Mammary epithelial cell (primary cell): ENCODE measurements at regions of chr7 and their contacts with region 1.

Region 1: GRCh38 chr7:87345166-87345927 is at the start of gene CROT:
- DNase-seq: peak; percentile 92
- H3K4me3 ChIP-seq: peak within 1 kb of the TSS; percentile 76 to 96 (median 90)
- H3K27ac ChIP-seq: peak within 1 kb of the TSS; percentile 77
- H3K4me1 ChIP-seq: peaks cover 35% of the 10 kb centered on the region
- H3K27me3 ChIP-seq: no peaks in the 10 kb centered on the region
- CTCF ChIP-seq: peak in 1 of 2 donors; percentile 2
- total RNA-seq, gene CROT: 15.9 to 34.0 TPM

Region 2: GRCh38 chr7:87231256-87231655 is 114.1 kb before region 1 on chr7:
- CTCF ChIA-PET with region 1: no interaction called
- dilution Hi-C with region 1: no loop called
- in situ Hi-C with region 1: no loop called
- intact Hi-C with region 1: no loop called
- DNase-seq: no peak
- H3K4me3 ChIP-seq: no peak overlapping the region
- H3K27ac ChIP-seq: no peak overlapping the region
- H3K4me1 ChIP-seq: no peaks in the 10 kb centered on the region
- H3K27me3 ChIP-seq: peaks cover 3% of the 10 kb centered on the region
- CTCF ChIP-seq: no peak

Region 3: GRCh38 chr7:87359366-87359765 is 14.0 kb after region 1 on chr7:
- CTCF ChIA-PET with region 1: no interaction called
- dilution Hi-C with region 1: no loop called
- in situ Hi-C with region 1: no loop called
- intact Hi-C with region 1: loop called (anchors 2 kb)
- DNase-seq: peak; percentile 83
- H3K4me3 ChIP-seq: no peak overlapping the region
- H3K27ac ChIP-seq: peak overlapping the region; percentile 43
- H3K4me1 ChIP-seq: peaks cover 15% of the 10 kb centered on the region
- H3K27me3 ChIP-seq: no peaks in the 10 kb centered on the region
- CTCF ChIP-seq: no peak

Region 4: DNA sequence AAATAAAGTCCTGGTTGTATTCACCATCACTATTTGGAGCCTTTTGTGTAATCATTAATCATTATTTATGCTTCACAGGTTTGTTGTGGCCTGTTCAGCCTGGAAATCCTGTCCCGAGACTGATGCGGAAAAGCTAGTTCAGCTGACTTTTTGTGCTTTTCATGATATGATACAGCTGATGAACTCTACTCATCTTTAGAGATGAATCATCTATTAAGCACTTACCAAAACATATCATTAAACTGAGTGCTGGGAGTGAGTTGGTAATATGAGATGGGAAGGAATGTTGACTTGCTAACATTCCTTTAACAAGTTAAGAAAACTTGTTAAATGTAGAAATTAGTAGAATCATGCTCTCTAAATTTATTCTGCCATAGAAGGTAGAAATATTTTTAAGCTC is 53.1 kb after region 1 on chr7:
- CTCF ChIA-PET with region 1: no interaction called
- dilution Hi-C with region 1: no loop called
- in situ Hi-C with region 1: no loop called
- intact Hi-C with region 1: loop called (anchors 5 kb)
- DNase-seq: peak; percentile 41
- H3K4me3 ChIP-seq: no peak overlapping the region
- H3K27ac ChIP-seq: no peak overlapping the region
- H3K4me1 ChIP-seq: peaks cover 6% of the 10 kb centered on the region
- H3K27me3 ChIP-seq: no peaks in the 10 kb centered on the region
- CTCF ChIP-seq: no peak

Region 5: GRCh38 chr7:87416682-87417587 is 71.6 kb after region 1 on chr7:
- CTCF ChIA-PET with region 1: no interaction called
- dilution Hi-C with region 1: no loop called
- in situ Hi-C with region 1: no loop called
- intact Hi-C with region 1: loop called (anchors 2 kb)
- DNase-seq: peak; percentile 44
- H3K4me3 ChIP-seq: no peak overlapping the region
- H3K27ac ChIP-seq: no peak overlapping the region
- H3K4me1 ChIP-seq: no peaks in the 10 kb centered on the region
- H3K27me3 ChIP-seq: no peaks in the 10 kb centered on the region
- CTCF ChIP-seq: peak; percentile 56